ENCODE measurements at regions of chr2 and their contacts with region 1.

Region 1: DNA sequence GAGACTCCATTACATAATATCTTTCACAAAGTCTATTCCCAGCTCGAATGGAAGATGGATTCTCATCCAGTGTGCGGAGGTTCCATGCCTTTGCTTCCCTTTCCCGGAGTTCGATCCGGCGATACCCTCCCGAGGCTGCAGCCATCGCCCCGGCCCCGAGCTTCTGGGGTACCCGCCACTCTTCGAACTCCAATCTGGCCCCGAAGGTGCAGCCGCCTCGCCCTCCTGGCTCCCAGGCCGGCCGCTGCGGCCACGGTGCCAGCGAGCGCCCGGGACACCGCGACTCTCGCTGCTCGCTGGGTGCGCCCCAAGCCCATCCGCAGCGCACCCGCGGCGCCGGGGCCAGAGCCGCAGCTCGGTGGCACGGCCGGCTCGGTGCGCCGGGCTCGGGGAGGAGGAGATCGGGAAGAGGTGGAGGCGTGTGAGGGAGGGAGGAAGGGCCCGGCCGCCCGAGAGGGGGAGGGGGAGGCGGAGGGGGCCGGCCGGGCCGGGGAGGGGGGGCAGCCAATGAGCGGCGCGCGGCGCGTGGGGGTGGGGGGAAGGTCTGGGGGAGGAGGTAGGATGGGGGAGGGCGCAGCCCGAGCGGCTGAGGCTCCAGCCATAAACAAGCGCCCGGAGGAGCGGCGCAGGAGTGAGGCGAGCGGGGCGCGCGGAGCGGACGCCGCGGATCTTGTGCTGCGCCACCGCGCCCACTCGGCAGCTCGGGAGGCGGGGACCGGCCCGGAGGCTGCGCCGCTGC is at the start of gene CRIM1:
- DNase-seq: peak; percentile 88 to 95
- H3K4me3 ChIP-seq: peak within 1 kb of the TSS; percentile 94
- H3K27ac ChIP-seq: peak within 1 kb of the TSS; percentile 92 to 97
- H3K4me1 ChIP-seq: peaks cover 0 to 52% (median 22%) of the 10 kb centered on the region in 4 donors
- H3K27me3 ChIP-seq: no peaks in the 10 kb centered on the region
- CTCF ChIP-seq: no peak

Region 2: DNA sequence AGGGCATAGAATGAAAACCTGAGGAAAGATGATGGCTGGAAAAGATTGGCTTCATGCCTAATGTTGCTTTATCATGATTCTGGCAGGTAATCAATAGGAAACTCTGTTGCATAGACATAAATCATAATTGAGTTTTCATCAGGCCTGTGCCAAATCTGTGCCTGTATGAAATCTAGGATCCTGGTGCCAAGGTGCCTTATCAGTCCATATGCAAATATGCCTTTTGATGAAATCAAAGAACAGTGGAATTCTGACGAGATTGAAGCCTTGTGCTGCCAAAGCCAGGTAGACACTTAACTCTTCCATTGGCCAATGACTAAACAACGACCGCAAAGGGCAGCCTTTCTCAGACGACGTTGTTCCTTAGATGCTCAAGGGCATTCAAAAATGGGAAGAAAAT is 169.7 kb before region 1 on chr2:
- intact Hi-C with region 1: no loop called
- DNase-seq: no peak
- H3K4me3 ChIP-seq: no peak overlapping the region
- H3K27ac ChIP-seq: no peak overlapping the region
- H3K4me1 ChIP-seq: no peaks in the 10 kb centered on the region
- H3K27me3 ChIP-seq: no peaks in the 10 kb centered on the region
- CTCF ChIP-seq: no peak

Region 3: DNA sequence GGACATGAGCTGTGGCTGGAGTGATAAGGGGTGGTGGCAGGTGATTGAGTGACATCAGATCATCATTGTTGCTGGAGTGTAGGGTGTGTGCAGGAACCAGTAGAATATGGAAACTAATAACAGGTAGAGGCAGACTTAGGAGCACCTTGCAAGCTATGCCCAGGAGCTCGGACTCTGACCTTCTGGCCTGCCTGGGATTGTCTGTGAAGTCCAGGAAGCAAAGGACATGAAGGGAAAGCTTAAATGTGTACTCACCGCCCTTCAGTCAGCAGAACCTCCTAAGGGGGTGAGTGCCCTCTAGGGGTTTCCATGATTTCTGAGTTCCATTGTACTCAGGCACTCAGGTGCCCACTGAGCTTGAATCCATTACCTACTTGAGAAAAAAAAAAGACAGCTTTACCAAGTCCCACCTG is 104.4 kb after region 1 on chr2:
- intact Hi-C with region 1: loop called (anchors 5 kb)
- DNase-seq: no peak
- H3K4me3 ChIP-seq: no peak overlapping the region
- H3K27ac ChIP-seq: peak overlapping the region; percentile 72 to 79
- H3K4me1 ChIP-seq: peaks cover 4 to 100% (median 75%) of the 10 kb centered on the region in 4 donors
- H3K27me3 ChIP-seq: no peaks in the 10 kb centered on the region
- CTCF ChIP-seq: peak; percentile 43 to 53

Region 4: DNA sequence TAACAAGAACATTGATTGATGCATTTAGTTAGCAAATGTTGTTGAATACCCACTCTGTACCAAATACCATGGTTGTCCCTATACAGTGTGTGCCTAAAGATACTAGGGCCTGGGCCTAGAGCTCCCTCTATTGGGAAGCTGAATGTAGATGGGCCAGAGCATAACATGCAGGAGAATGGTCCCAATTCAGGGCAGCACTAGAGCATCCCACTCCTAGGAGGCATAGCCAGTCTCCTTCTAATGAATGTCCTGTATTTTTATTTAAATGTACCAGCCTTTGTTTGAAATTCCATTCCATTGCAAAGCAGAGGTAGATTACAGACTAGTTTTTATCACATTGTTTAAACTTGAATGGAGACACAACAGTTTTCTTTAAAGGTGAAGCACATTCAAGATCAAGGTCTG is 152.1 kb after region 1 on chr2:
- intact Hi-C with region 1: loop called (anchors 5 kb)
- DNase-seq: peak in 1 of 2 donors; percentile 41
- H3K4me3 ChIP-seq: no peak overlapping the region
- H3K27ac ChIP-seq: peak overlapping the region in 1 of 2 donors; percentile 51
- H3K4me1 ChIP-seq: peaks cover 0 to 67% (median 3%) of the 10 kb centered on the region in 4 donors
- H3K27me3 ChIP-seq: no peaks in the 10 kb centered on the region
- CTCF ChIP-seq: peak; percentile 48 to 71

Region 5: DNA sequence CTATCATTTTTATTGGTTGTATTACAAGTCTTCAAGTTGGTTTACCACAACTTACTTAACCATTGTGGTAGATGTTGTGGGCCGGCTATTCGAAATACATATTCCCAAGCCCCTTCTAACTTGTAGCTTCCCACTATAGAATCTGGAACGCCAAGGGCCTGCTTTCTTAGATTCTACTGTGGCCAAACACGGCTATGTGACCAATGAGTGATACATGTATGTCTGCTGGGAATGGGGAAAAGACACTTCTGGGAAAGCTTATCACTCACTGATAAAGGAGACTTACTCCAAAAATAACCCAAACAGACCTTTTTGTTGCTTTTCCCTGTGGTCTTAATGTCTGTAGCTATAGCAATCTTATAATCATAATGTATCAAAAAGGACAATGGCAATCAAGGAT is 586.5 kb after region 1 on chr2:
- intact Hi-C with region 1: loop called (anchors 5 kb)
- DNase-seq: no peak
- H3K4me3 ChIP-seq: no peak overlapping the region
- H3K27ac ChIP-seq: no peak overlapping the region
- H3K4me1 ChIP-seq: peaks cover 0 to 8% (median 0%) of the 10 kb centered on the region in 4 donors
- H3K27me3 ChIP-seq: no peaks in the 10 kb centered on the region
- CTCF ChIP-seq: no peak